Tibial artery (tissue), 4 donors: ENCODE measurements at regions of chr20 and their contacts with region 1.

Region 1: GRCh38 chr20:6870559-6870958 is 103.1 kb downstream of the BMP2 start:
- DNase-seq: no peak
- H3K4me3 ChIP-seq: no peak overlapping the region
- H3K27ac ChIP-seq: no peak overlapping the region
- H3K4me1 ChIP-seq: no peaks in the 10 kb centered on the region
- H3K27me3 ChIP-seq: peaks cover 0 to 13% of the 10 kb centered on the region in 2 donors
- CTCF ChIP-seq: no peak

Region 2: GRCh38 chr20:6575912-6576401 is 294.6 kb before region 1 on chr20:
- intact Hi-C with region 1: no loop called
- DNase-seq: no peak
- H3K4me3 ChIP-seq: no peak overlapping the region
- H3K27ac ChIP-seq: no peak overlapping the region
- H3K4me1 ChIP-seq: no peaks in the 10 kb centered on the region
- H3K27me3 ChIP-seq: no peaks in the 10 kb centered on the region
- CTCF ChIP-seq: no peak

Region 3: DNA sequence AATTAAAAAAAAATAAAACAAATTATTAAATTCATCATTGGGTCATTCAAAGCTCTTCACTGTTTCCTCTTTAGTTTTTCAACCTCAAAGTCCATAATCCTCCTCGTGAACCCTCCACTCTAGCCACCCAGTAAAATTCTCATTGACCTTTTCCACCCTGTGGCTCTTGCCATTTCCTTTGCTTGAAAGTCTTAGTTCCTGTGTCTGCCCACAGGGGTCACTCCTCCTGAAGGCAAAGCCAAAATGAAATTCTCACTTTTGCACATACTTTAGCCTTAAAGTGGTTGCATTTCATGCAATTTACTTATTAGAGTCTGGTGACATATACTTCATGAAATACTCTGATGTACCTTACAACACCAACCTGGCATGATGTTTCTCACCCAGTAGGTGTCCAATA is 160.7 kb after region 1 on chr20:
- intact Hi-C with region 1: loop called (anchors 5 kb)
- DNase-seq: no peak
- H3K4me3 ChIP-seq: no peak overlapping the region
- H3K27ac ChIP-seq: no peak overlapping the region
- H3K4me1 ChIP-seq: no peaks in the 10 kb centered on the region
- H3K27me3 ChIP-seq: no peaks in the 10 kb centered on the region
- CTCF ChIP-seq: no peak

Region 4: GRCh38 chr20:7123457-7123856 is 252.9 kb after region 1 on chr20:
- intact Hi-C with region 1: no loop called
- DNase-seq: no peak
- H3K4me3 ChIP-seq: no peak overlapping the region
- H3K27ac ChIP-seq: no peak overlapping the region
- H3K4me1 ChIP-seq: no peaks in the 10 kb centered on the region
- H3K27me3 ChIP-seq: no peaks in the 10 kb centered on the region
- CTCF ChIP-seq: no peak